HepG2 (cell line): ENCODE measurements at regions of chr17 and their contacts with region 1.

Region 1: GRCh38 chr17:32253117-32253611 is 12.5 kb upstream of the RHBDL3 start:
- DNase-seq: peak; percentile 70
- ATAC-seq: peak; percentile 96
- H3K4me3 ChIP-seq: no peak overlapping the region
- H3K27ac ChIP-seq: no peak overlapping the region
- H3K4me1 ChIP-seq: peaks cover 23% of the 10 kb centered on the region
- H3K27me3 ChIP-seq: peaks cover 0 to 2% of the 10 kb centered on the region in 2 experiments; a peak in 1 of 5 replicates
- CTCF ChIP-seq: peak; percentile 97
- EP300 ChIP-seq: no peak
- POLR2A ChIP-seq: no peak
- RAD21 ChIP-seq: peak; percentile 96

Region 2: GRCh38 chr17:31967648-31968047 is 285.5 kb before region 1 on chr17:
- CTCF ChIA-PET with region 1: no interaction called
- POLR2A ChIA-PET with region 1: no interaction called
- in situ Hi-C with region 1: no loop called
- intact Hi-C with region 1: no loop called
- DNase-seq: no peak
- ATAC-seq: no peak
- H3K4me3 ChIP-seq: no peak overlapping the region
- H3K27ac ChIP-seq: no peak overlapping the region
- H3K4me1 ChIP-seq: 0 out of 2 replicates have a peak, but pooled peaks cover 8% of the 10 kb centered on the region
- H3K27me3 ChIP-seq: no peaks in the 10 kb centered on the region
- CTCF ChIP-seq: no peak
- EP300 ChIP-seq: no peak
- POLR2A ChIP-seq: no peak
- RAD21 ChIP-seq: no peak

Region 3: GRCh38 chr17:32289454-32290070 is 36.4 kb after region 1 on chr17:
- CTCF ChIA-PET with region 1: no interaction called
- POLR2A ChIA-PET with region 1: no interaction called
- in situ Hi-C with region 1: no loop called
- intact Hi-C with region 1: no loop called
- DNase-seq: no peak
- ATAC-seq: no peak
- H3K4me3 ChIP-seq: no peak overlapping the region
- H3K27ac ChIP-seq: no peak overlapping the region
- H3K4me1 ChIP-seq: peaks cover 15% of the 10 kb centered on the region
- H3K27me3 ChIP-seq: peaks cover 0 to 1% of the 10 kb centered on the region in 2 experiments; a peak in 1 of 5 replicates
- CTCF ChIP-seq: no peak
- EP300 ChIP-seq: no peak
- POLR2A ChIP-seq: no peak
- RAD21 ChIP-seq: no peak

Region 4: GRCh38 chr17:32302860-32303649 is 49.9 kb after region 1 on chr17:
- CTCF ChIA-PET with region 1: no interaction called
- POLR2A ChIA-PET with region 1: no interaction called
- in situ Hi-C with region 1: no loop called
- intact Hi-C with region 1: loop called (anchors 5 kb)
- DNase-seq: peak; percentile 84
- ATAC-seq: peak; percentile 87
- H3K4me3 ChIP-seq: peak overlapping the region in 1 of 3 experiments; percentile 35; a peak in 1 of 6 replicates
- H3K27ac ChIP-seq: peak overlapping the region; percentile 87
- H3K4me1 ChIP-seq: peaks cover 55% of the 10 kb centered on the region
- H3K27me3 ChIP-seq: peaks cover 0 to 1% of the 10 kb centered on the region in 2 experiments; a peak in 2 of 5 replicates
- CTCF ChIP-seq: no peak
- EP300 ChIP-seq: peak in 1 of 2 experiments; percentile 72; a peak in 2 of 4 replicates
- POLR2A ChIP-seq: no peak
- RAD21 ChIP-seq: no peak